Spleen (tissue), 13 donors: ENCODE measurements at regions of chr1 and their contacts with region 1.

Region 1: DNA sequence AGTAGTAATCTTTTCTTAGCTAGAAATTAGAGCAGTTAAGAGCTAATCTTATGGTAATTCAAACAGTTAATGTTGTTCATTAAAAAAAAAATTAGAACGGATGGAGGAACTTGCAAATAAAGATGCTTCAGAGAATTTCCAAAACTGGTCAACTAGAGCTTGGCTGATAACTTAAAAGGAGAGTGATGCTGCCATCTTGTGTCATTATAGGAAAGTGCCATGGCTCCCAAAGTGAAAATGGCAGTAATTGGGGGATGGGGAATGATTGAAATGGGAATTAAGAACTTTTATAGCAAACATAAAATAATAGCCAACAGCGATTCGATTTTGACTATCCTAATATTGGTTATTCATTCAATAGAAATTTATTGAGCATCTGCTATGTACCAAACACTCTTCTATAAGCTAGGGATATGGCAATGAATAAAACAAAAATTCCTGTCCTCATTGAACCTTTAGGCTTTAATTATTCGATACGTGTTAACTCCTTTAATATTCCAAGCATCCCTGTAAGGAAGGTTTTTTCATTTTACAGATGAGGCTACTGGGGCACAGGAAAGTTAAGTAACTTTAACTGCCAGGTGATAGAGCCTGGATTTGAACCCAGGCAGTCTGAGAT is 5.7 kb upstream of the PLPP3 start:
- DNase-seq: no peak
- H3K4me3 ChIP-seq: no peak overlapping the region
- H3K27ac ChIP-seq: no peak overlapping the region
- H3K4me1 ChIP-seq: peaks cover 1 to 15% (median 6%) of the 10 kb centered on the region in 6 donors
- H3K27me3 ChIP-seq: no peaks in the 10 kb centered on the region
- CTCF ChIP-seq: peak; percentile 79 to 94 (median 85)
- POLR2A ChIP-seq: no peak

Region 2: DNA sequence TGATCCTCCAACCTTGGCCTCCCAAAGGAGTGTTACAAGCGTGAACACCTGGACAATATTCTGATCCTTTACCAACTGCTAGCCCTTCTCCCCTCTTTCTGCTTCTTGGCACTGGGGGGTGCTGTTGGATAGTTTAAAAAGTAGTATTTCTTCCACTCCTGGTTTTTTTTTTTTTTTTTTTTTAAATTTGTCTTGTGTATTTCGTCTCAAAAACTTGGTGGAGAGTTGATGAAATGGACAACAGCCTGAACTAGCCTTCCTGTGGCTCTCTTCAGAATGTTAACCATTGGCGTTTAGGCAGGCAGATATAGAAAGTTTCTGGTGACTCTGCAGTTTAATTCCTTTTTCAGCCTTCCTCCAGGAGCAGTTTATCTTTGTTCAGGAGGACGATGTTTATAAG is 1300.2 kb before region 1 on chr1:
- intact Hi-C with region 1: loop called (anchors 5 kb)
- DNase-seq: no peak
- H3K4me3 ChIP-seq: no peak overlapping the region
- H3K27ac ChIP-seq: no peak overlapping the region
- H3K4me1 ChIP-seq: peaks cover 0 to 24% (median 4%) of the 10 kb centered on the region in 6 donors
- H3K27me3 ChIP-seq: no peaks in the 10 kb centered on the region
- CTCF ChIP-seq: peak; percentile 41 to 81 (median 63)
- POLR2A ChIP-seq: no peak

Region 3: DNA sequence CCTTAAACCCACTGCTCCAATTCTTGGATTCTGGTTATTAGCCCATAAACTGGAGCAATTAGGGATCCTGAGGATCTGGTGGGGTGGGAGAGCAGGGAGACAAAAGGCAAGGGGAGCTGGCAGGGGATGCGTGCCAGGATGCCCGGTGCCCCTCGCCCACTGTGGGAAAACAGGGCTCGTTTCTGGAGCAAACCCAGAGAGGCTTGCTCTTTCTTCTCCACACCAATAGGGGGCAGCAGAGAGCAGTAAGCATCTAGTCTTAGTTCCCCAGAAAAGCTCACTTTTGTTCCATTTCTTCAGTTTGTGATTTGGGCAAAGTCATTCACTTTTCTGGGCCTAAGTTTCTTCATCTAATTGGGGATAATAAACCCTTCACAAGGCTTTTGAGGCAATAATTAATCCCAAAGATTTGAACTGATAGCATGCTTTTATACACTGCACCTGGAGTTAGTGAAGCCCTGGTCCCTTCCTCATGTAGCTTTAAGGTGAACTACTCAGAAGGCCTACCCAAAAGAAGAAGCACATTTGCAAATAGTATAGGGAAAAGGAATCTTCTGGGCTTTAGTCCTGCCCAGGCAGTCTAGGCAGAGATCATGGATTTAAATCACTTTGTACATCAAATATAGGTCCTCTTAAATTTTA is 1209.3 kb before region 1 on chr1:
- intact Hi-C with region 1: loop called (anchors 5 kb)
- DNase-seq: no peak
- H3K4me3 ChIP-seq: no peak overlapping the region
- H3K27ac ChIP-seq: no peak overlapping the region
- H3K4me1 ChIP-seq: peaks cover 0 to 7% (median 0%) of the 10 kb centered on the region in 6 donors
- H3K27me3 ChIP-seq: no peaks in the 10 kb centered on the region
- CTCF ChIP-seq: peak; percentile 53 to 94 (median 84)
- POLR2A ChIP-seq: no peak

Region 4: GRCh38 chr1:55478742-55479141 is 1106.3 kb before region 1 on chr1:
- intact Hi-C with region 1: loop called (anchors 10 kb)
- DNase-seq: no peak
- H3K4me3 ChIP-seq: no peak overlapping the region
- H3K27ac ChIP-seq: no peak overlapping the region
- H3K4me1 ChIP-seq: peaks cover 0 to 13% (median 0%) of the 10 kb centered on the region in 6 donors
- H3K27me3 ChIP-seq: peaks cover 0 to 21% (median 0%) of the 10 kb centered on the region in 7 donors
- CTCF ChIP-seq: peak in 2 of 11 experiments; percentile 20 to 33
- POLR2A ChIP-seq: no peak

Region 5: DNA sequence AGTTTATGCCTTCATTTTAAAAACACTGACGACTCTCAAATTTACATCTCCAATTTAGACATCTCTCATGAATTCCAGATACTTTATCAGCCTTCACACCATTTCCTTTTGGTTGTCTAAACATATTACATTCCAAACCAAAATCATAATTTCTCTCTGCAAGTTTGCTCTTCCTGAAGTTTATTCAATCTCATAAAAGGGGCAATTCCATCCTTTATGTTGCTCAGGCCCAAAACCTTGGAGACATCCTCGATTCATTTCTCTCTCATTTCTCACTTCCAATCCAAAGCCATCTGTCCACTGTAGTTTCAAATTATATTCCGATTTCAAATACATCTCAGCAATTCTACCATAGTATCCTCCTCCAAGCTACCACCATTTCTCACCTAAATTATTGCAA is 160.2 kb after region 1 on chr1:
- intact Hi-C with region 1: no loop called
- DNase-seq: no peak
- H3K4me3 ChIP-seq: no peak overlapping the region
- H3K27ac ChIP-seq: no peak overlapping the region
- H3K4me1 ChIP-seq: no peaks in the 10 kb centered on the region
- H3K27me3 ChIP-seq: peaks cover 0 to 7% (median 0%) of the 10 kb centered on the region in 7 donors
- CTCF ChIP-seq: no peak
- POLR2A ChIP-seq: no peak